MCF 10A (cell line): ENCODE measurements at regions of chr11 and their contacts with region 1.

Region 1: GRCh38 chr11:88337181-88337986 is at the start of gene CTSC:
- DNase-seq: peak; percentile 96
- H3K4me3 Mint-ChIP-seq: peak within 1 kb of the TSS; percentile 99
- H3K27ac Mint-ChIP-seq: peak within 1 kb of the TSS; percentile 97
- H3K4me1 Mint-ChIP-seq: peaks cover 25% of the 10 kb centered on the region
- H3K27me3 Mint-ChIP-seq: no peaks in the 10 kb centered on the region
- CTCF ChIP-seq: no peak
- total RNA-seq, gene CTSC: 79.1 and 103 TPM in 2 replicates

Region 2: DNA sequence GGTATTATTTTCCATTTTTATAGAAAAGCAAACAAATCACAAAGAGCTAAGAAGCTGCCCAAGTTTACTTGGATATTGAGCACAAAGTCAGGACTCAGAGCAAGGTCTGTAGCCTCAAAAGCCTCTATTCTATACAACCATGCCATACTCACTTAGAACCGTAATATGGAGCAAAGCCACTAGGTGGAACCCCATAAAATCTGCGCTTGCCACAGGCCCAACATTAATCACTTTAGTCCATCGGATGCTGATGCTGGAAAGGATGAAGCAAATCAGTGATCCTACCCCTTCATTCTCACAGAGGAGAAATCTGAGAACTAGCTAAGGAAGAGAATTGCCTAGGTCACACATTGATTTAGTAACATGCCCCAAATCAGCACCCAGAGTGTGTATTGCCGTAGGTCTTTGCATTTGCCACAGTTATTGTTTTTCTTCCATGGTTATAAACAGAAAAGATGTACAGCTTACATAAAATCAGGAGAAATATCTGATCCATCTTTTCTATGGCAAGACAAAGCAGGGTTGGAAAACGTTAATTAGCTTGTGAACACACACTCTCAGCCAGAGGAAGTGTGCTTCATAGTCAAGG is 105.4 kb before region 1 on chr11:
- CTCF ChIA-PET with region 1: interaction called, 3 read pairs
- POLR2A ChIA-PET with region 1: interaction called, 3 read pairs
- intact Hi-C with region 1: loop called (anchors 2 kb)
- DNase-seq: peak; percentile 59
- H3K4me3 Mint-ChIP-seq: no peak overlapping the region
- H3K27ac Mint-ChIP-seq: no peak overlapping the region
- H3K4me1 Mint-ChIP-seq: peaks cover 5% of the 10 kb centered on the region
- H3K27me3 Mint-ChIP-seq: no peaks in the 10 kb centered on the region
- CTCF ChIP-seq: peak; percentile 53

Region 3: DNA sequence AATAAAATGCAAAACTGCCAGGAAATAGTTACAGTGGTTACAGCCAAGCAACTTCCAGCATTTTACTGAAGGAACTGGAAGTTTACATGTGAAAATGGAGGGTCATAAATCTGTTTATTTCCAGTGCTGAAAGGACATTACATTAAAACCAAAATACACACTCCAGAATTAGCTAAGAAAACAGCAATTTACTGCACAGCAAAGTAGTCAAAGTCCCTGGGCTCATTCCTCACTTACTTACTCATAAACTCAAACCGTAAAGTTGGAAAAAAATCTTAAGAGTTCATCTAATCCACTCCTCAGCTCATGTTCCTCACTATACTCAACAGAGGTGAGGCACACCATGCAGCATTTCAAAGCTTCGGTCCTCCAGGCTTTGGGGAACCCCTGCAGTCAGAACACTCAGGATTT is 17.2 kb before region 1 on chr11:
- CTCF ChIA-PET with region 1: interaction called, 3 read pairs
- POLR2A ChIA-PET with region 1: interaction called, 28 read pairs
- intact Hi-C with region 1: no loop called
- DNase-seq: no peak
- H3K4me3 Mint-ChIP-seq: peak overlapping the region; percentile 14
- H3K27ac Mint-ChIP-seq: peak overlapping the region; percentile 84
- H3K4me1 Mint-ChIP-seq: peaks cover 29% of the 10 kb centered on the region
- H3K27me3 Mint-ChIP-seq: no peaks in the 10 kb centered on the region
- CTCF ChIP-seq: no peak

Region 4: GRCh38 chr11:88357323-88358039 is 20.1 kb after region 1 on chr11:
- CTCF ChIA-PET with region 1: interaction called, 5 read pairs
- POLR2A ChIA-PET with region 1: interaction called, 65 read pairs
- intact Hi-C with region 1: no loop called
- DNase-seq: peak; percentile 57
- H3K4me3 Mint-ChIP-seq: peak overlapping the region; percentile 3
- H3K27ac Mint-ChIP-seq: peak overlapping the region; percentile 63
- H3K4me1 Mint-ChIP-seq: peaks cover 6% of the 10 kb centered on the region
- H3K27me3 Mint-ChIP-seq: no peaks in the 10 kb centered on the region
- CTCF ChIP-seq: no peak

Region 5: GRCh38 chr11:88414385-88414861 is 77.0 kb after region 1 on chr11:
- CTCF ChIA-PET with region 1: interaction called, 5 read pairs
- POLR2A ChIA-PET with region 1: interaction called, 80 read pairs
- intact Hi-C with region 1: no loop called
- DNase-seq: peak; percentile 83
- H3K4me3 Mint-ChIP-seq: no peak overlapping the region
- H3K27ac Mint-ChIP-seq: peak overlapping the region; percentile 20
- H3K4me1 Mint-ChIP-seq: peaks cover 37% of the 10 kb centered on the region
- H3K27me3 Mint-ChIP-seq: no peaks in the 10 kb centered on the region
- CTCF ChIP-seq: no peak

Region 6: DNA sequence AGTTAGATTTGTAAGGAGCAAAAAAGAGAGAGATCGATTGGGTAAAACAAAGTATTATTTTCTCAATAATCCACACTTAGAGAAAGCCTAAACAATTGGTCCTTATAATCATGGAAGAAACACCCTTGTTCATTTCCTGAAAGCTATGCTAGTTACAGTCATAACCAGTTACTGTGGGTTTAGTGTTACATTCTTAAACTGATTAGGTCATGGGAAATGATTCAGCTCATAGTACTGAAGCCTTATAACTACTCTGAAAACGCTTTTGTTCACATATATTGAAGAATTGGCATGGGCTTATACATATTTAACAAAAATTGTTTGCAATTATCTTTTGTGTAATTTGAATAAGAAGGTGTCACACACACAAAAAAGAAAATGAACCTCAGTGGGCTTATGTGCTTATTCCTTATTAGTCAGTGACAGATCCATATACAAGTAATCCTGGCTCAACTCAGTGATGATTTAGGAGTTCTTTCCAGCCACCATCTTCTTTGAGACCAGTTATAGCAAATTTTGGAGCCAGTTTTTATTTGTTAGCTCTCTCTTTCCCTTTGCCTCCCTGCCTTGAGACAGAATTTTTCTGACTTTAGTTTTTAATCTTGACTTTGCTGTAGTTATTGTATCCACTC is 198.6 kb after region 1 on chr11:
- CTCF ChIA-PET with region 1: no interaction called
- POLR2A ChIA-PET with region 1: interaction called, 44 read pairs
- intact Hi-C with region 1: no loop called
- DNase-seq: peak; percentile 82
- H3K4me3 Mint-ChIP-seq: no peak overlapping the region
- H3K27ac Mint-ChIP-seq: peak overlapping the region; percentile 0
- H3K4me1 Mint-ChIP-seq: peaks cover 37% of the 10 kb centered on the region
- H3K27me3 Mint-ChIP-seq: no peaks in the 10 kb centered on the region
- CTCF ChIP-seq: no peak